Caco-2 (cell line): ENCODE measurements at regions of chr12 and their contacts with region 1.

Region 1: GRCh38 chr12:44960856-44961255 is 84.7 kb upstream of the NELL2 start:
- DNase-seq: peak; percentile 26 to 44
- H3K4me3 ChIP-seq: no peak overlapping the region
- H3K4me3 Mint-ChIP-seq: no peak overlapping the region
- H3K27ac Mint-ChIP-seq: no peak overlapping the region
- H3K4me1 ChIP-seq: no peaks in the 10 kb centered on the region
- H3K4me1 Mint-ChIP-seq: no peaks in the 10 kb centered on the region
- H3K27me3 ChIP-seq: peaks cover 1% of the 10 kb centered on the region
- H3K27me3 Mint-ChIP-seq: peaks cover 7% of the 10 kb centered on the region
- CTCF ChIP-seq: peak; percentile 13 to 23

Region 2: DNA sequence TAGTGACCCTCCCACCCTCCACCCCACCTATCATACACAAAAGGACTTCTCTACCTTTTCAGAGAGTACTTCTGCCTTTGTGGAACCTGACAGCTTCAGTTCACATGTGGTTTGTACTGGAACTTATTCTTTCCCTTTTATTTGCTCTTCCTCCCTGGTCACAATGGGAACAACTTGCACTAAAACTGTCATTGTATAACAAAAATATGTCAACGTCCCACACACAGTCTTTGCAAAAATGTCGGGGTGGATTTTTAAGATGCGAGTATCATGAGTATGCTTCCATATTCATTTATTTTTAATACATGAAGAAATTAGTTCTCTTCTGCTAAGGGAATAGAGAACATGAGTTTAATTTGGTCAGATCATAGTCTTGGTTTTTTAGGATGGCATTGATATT is 39.1 kb before region 1 on chr12:
- CTCF ChIA-PET with region 1: no interaction called
- POLR2A ChIA-PET with region 1: no interaction called
- intact Hi-C with region 1: no loop called
- DNase-seq: no peak
- H3K4me3 ChIP-seq: no peak overlapping the region
- H3K4me3 Mint-ChIP-seq: no peak overlapping the region
- H3K27ac Mint-ChIP-seq: no peak overlapping the region
- H3K4me1 ChIP-seq: no peaks in the 10 kb centered on the region
- H3K4me1 Mint-ChIP-seq: no peaks in the 10 kb centered on the region
- H3K27me3 ChIP-seq: no peaks in the 10 kb centered on the region; the same call in 1 of the 2 replicates
- H3K27me3 Mint-ChIP-seq: peaks cover 21% of the 10 kb centered on the region
- CTCF ChIP-seq: no peak

Region 3: DNA sequence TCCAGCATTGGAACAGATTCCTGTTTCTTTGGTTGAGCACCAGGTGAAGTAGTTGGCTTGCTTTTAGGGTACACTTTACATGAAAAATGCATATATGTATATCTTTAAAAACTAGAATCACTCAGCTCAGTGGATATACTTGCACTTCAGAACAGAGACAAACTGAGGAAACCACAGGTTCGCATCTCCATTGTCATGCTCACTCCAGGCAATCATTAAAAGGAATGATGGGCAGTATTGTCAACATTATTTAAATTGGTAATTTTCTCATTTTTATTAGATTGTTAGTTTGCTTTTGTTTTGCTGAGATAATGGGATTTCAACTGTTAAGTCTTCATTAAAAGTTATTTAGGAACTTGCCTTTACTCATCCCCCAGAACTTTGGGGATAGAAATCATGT is 13.7 kb before region 1 on chr12:
- CTCF ChIA-PET with region 1: interaction called, 13 read pairs
- POLR2A ChIA-PET with region 1: no interaction called
- intact Hi-C with region 1: no loop called
- DNase-seq: no peak
- H3K4me3 ChIP-seq: no peak overlapping the region
- H3K4me3 Mint-ChIP-seq: no peak overlapping the region
- H3K27ac Mint-ChIP-seq: no peak overlapping the region
- H3K4me1 ChIP-seq: peaks cover 10% of the 10 kb centered on the region; the same call in 1 of the 2 replicates
- H3K4me1 Mint-ChIP-seq: peaks cover 9% of the 10 kb centered on the region
- H3K27me3 ChIP-seq: no peaks in the 10 kb centered on the region
- H3K27me3 Mint-ChIP-seq: peaks cover 5% of the 10 kb centered on the region
- CTCF ChIP-seq: no peak